ENCODE measurements at regions of chr7 and their contacts with region 1.

Region 1: DNA sequence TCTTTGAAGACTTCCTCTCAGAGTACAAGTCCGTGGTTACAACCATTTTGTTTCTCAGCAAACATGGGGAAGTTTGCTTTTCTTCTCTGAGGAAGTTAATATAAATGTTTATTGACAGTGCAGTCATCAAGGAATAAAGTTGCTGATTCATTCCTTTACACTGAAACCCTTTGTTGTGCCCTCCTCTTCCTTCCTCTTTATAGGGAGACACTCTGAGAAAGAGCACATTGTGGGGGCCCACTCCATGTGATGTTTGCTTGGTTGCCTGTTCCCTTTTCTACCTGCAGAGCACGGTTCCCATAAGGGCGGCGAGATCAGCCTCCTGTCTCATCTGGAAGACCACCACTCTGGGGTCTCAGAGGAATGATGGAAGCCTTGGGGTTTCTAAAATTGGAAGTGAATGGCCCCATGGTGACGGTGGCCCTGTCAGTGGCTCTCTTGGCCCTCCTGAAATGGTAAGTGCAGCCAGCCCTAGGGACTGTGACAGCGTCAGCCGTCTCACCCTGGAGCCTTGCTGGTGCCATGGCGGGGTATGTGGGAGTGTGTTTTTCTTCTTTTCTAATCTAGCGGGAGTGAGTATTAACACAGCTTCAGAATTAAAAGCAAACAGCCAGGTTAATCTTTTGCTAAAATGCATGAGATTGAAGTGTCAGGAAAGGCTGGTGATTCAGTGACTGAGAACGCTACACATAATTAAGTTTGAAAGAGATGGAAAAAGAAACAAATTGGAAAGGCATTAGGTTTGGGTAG is at the start of gene TBXAS1:
- DNase-seq: peak; percentile 84 to 96 (median 91)
- H3K4me3 ChIP-seq: peak within 1 kb of the TSS; percentile 64 to 98 (median 86)
- H3K4me3 Mint-ChIP-seq: peak within 1 kb of the TSS; percentile 90 to 99
- H3K27ac ChIP-seq: peak within 1 kb of the TSS; percentile 90 to 94
- H3K27ac Mint-ChIP-seq: peak within 1 kb of the TSS; percentile 95 to 99 (median 97)
- H3K4me1 ChIP-seq: peaks cover 34 to 46% of the 10 kb centered on the region in 2 donors
- H3K4me1 Mint-ChIP-seq: peaks cover 45% of the 10 kb centered on the region
- H3K27me3 ChIP-seq: no peaks in the 10 kb centered on the region
- H3K27me3 Mint-ChIP-seq: peaks cover 0 to 6% (median 2%) of the 10 kb centered on the region in 3 donors
- CTCF ChIP-seq: no peak
- polyA plus RNA-seq, gene TBXAS1: 289 to 335 (median 298) TPM

Region 2: GRCh38 chr7:139777948-139778841 is 51.0 kb before region 1 on chr7 and contains the start of gene HIPK2:
- intact Hi-C with region 1: loop called (anchors 5 to 10 kb)
- DNase-seq: peak; percentile 32 to 46 (median 42)
- H3K4me3 ChIP-seq: peak within 1 kb of the TSS; percentile 77 to 90 (median 89)
- H3K4me3 Mint-ChIP-seq: peak within 1 kb of the TSS; percentile 99 to 100
- H3K27ac ChIP-seq: peak within 1 kb of the TSS; percentile 86 to 94
- H3K27ac Mint-ChIP-seq: peak within 1 kb of the TSS; percentile 90 to 99 (median 97)
- H3K4me1 ChIP-seq: peaks cover 30 to 38% of the 10 kb centered on the region in 2 donors
- H3K4me1 Mint-ChIP-seq: peaks cover 37% of the 10 kb centered on the region
- H3K27me3 ChIP-seq: peaks cover 12 to 15% of the 10 kb centered on the region in 2 donors
- H3K27me3 Mint-ChIP-seq: peaks cover 19 to 22% (median 21%) of the 10 kb centered on the region in 3 donors
- CTCF ChIP-seq: no peak
- polyA plus RNA-seq, gene HIPK2: 1.6 to 12.1 (median 3.0) TPM

Region 3: DNA sequence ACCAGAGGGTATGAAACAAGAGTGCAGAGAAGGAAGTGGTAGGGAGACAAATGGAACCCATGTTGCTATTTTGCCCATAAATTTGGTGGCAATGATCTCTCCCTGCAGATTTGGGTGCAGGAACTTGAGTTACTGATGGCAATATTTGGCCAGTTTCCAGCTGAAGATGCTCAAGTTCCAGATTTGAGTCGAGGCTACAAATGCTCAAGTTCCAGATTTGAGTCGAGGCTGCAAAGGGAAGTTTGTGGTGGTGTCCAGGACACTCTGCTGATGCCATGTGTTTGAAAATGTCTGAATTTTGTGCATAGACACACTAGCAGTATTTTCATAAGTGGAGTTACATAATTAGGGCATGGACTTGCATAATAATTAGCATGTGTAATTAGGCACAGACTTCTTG is 40.7 kb after region 1 on chr7:
- intact Hi-C with region 1: loop called in 1 of 2 experiments (anchors 5 kb)
- DNase-seq: peak in 2 of 3 donors; percentile 32 to 47
- H3K4me3 ChIP-seq: no peak overlapping the region
- H3K4me3 Mint-ChIP-seq: no peak overlapping the region
- H3K27ac ChIP-seq: peak overlapping the region in 1 of 2 donors; percentile 60
- H3K27ac Mint-ChIP-seq: peak overlapping the region in 6 of 7 donors; percentile 25 to 85 (median 52)
- H3K4me1 ChIP-seq: peaks cover 13 to 21% of the 10 kb centered on the region in 2 donors
- H3K4me1 Mint-ChIP-seq: peaks cover 24% of the 10 kb centered on the region
- H3K27me3 ChIP-seq: no peaks in the 10 kb centered on the region
- H3K27me3 Mint-ChIP-seq: peaks cover 0 to 2% (median 0%) of the 10 kb centered on the region in 3 donors
- CTCF ChIP-seq: no peak

Measured in CD14-positive monocyte (primary cell).